ENCODE measurements at regions of chr6 and their contacts with region 1.

Region 1: DNA sequence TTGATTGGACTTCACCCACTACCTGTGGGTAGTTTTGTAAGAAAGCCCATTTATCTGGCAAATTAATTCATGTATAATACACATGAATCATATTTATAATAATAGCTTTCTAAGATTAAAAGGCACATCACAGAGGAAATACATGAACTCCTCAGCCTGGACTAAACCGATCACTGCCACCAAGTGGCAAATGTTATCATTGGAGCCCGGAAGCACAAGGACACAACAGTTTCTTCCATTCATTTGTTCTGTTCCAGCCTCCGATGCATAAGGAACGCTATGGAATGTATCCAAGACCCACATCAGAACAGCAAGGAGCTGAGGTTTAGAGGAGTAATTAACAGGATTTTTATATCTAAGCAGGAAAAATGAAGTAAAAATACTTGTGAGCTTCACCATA is 13.9 kb upstream of the IPCEF1 start:
- DNase-seq: peak; percentile 44 to 46
- H3K4me3 ChIP-seq: no peak overlapping the region
- H3K27ac ChIP-seq: no peak overlapping the region
- H3K4me1 ChIP-seq: peaks cover 0 to 7% of the 10 kb centered on the region in 2 donors
- H3K27me3 ChIP-seq: no peaks in the 10 kb centered on the region
- CTCF ChIP-seq: peak in 5 of 6 experiments; percentile 8 to 64 (median 60)
- POLR2A ChIP-seq: no peak

Region 2: DNA sequence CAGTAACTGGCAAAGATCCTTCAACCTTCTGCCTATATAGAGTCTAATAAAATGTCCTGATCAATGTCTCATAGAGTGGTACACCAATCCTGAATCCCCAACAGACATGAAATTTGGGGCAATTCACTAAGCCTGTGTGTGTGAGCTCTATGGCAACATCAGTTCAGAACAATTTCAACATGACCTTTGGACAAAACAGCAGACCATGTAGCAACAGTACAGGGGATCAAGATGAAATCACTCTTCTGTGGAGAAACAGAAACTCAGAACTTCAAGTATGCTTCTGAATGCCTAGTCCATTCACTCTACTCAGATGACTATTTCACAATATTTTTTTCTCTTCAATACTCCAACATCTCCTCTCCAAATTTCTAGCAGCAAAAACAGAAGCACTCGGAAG is 380.6 kb before region 1 on chr6:
- intact Hi-C with region 1: no loop called
- DNase-seq: no peak
- H3K4me3 ChIP-seq: no peak overlapping the region
- H3K27ac ChIP-seq: no peak overlapping the region
- H3K4me1 ChIP-seq: peaks cover 0 to 9% of the 10 kb centered on the region in 2 donors
- H3K27me3 ChIP-seq: no peaks in the 10 kb centered on the region
- CTCF ChIP-seq: no peak
- POLR2A ChIP-seq: no peak

Region 3: DNA sequence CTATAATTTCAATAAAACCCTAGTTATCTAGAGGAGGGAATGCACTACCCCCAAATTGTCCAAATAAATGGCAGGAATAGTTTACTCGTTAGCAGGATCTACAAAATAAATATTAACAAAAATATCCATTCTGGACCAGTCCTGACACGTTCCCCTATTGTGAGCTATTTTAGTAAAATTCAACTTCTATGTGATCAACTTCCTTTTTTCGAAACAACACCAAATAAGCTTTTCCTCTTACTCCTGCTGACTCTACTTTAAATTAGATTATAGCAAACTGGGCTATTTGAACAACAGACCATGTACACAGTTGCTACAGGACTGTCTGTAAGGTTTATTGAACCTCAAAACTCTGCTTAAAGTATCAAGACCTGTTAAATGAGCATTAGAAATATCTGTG is 168.2 kb before region 1 on chr6:
- intact Hi-C with region 1: no loop called
- DNase-seq: no peak
- H3K4me3 ChIP-seq: no peak overlapping the region
- H3K27ac ChIP-seq: no peak overlapping the region
- H3K4me1 ChIP-seq: peaks cover 3 to 6% of the 10 kb centered on the region in 2 donors
- H3K27me3 ChIP-seq: no peaks in the 10 kb centered on the region
- CTCF ChIP-seq: no peak
- POLR2A ChIP-seq: no peak

Region 4: DNA sequence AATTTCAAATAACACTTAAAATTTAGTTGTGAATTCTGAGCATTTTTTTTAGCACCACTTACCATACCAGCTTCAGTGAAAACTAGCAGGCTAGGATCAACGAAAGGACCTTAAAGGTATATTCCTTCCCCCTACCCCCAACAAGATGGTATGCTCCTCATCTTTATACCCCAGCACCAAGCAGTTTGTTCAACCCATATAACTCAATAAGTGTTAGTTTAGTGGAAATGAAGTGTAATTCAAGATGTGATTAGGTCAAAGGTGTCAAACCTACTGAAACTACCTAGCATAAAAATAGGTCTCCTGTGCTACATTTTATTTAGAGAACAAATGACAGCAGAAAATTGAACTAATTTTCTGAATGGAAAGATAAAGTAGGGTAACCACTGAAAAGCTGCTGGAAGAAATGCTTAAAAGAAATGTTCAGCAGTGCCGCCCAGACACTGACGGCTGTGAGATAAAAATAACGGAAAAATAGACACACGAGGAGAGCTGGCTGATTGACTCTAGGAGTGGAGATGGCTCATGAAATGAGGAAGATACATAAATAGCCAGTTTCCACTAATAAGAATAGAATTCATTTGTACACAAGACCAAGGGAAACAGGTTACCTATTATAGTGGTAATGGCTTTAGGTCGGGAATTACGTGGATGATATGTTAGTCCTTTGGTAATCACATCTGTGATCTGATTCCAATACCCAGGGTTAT is 108.7 kb before region 1 on chr6:
- intact Hi-C with region 1: loop called (anchors 10 kb)
- DNase-seq: no peak
- H3K4me3 ChIP-seq: no peak overlapping the region
- H3K27ac ChIP-seq: no peak overlapping the region
- H3K4me1 ChIP-seq: no peaks in the 10 kb centered on the region
- H3K27me3 ChIP-seq: no peaks in the 10 kb centered on the region
- CTCF ChIP-seq: no peak
- POLR2A ChIP-seq: no peak